Heart right ventricle (tissue), 16 donors: ENCODE measurements at regions of chr17 and their contacts with region 1.

Region 1: GRCh38 chr17:50087246-50087911 is 7.8 kb upstream of the PDK2 start:
- DNase-seq: peak; percentile 63 to 78
- ATAC-seq: peak; percentile 76 to 93 (median 86)
- H3K4me3 ChIP-seq: no peak overlapping the region
- H3K27ac ChIP-seq: no peak overlapping the region
- H3K4me1 ChIP-seq: no peaks in the 10 kb centered on the region
- H3K27me3 ChIP-seq: no peaks in the 10 kb centered on the region
- CTCF ChIP-seq: peak; percentile 94 to 99 (median 96)

Region 2: DNA sequence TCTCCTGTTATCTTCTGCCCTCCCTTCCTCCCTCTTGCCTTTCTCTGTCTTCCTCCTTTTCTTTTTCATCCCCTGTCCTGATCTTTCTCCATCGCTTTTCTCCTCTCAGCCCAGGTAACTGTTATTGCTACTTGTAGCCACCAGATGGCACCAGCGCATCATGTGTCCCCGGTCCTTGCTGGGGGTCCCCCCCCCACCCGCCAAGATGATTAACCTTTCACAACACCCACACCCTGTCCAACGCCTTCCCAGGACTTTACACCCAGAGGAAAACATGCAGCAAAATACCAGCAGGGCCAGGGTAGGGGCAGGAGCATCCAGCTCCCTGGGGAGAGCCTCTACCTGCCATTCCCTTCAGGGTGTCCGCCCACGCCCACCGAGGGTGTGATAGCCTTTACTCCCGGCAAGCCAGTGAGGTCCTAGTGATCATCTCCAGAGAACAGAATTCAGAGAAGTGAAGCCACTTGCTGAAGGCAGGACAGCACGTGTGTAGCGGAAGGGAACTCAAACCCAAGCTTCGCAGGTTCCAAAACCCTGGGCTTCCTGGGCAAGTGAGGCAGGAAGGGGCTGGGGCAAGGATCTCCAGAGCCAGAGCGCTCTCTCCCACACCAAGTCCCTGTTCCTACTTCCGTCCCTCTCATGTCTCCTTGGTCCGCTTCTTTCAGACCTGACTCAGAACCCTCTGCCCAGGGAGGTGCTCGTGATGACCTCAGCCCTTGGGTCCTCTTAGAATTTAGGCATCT is 226.1 kb before region 1 on chr17:
- intact Hi-C with region 1: loop called in 1 of 10 experiments (anchors 10 kb)
- DNase-seq: peak in 1 of 2 donors; percentile 27
- ATAC-seq: peak in 7 of 8 donors; percentile 16 to 58 (median 40)
- H3K4me3 ChIP-seq: no peak overlapping the region
- H3K27ac ChIP-seq: no peak overlapping the region
- H3K4me1 ChIP-seq: peaks cover 0 to 12% (median 3%) of the 10 kb centered on the region in 9 donors
- H3K27me3 ChIP-seq: peaks cover 0 to 14% (median 0%) of the 10 kb centered on the region in 7 donors
- CTCF ChIP-seq: peak; percentile 54 to 90 (median 84)

Region 3: GRCh38 chr17:49880291-49881053 is 206.9 kb before region 1 on chr17:
- intact Hi-C with region 1: loop called in 1 of 10 experiments (anchors 10 kb)
- DNase-seq: peak; percentile 61 to 76
- ATAC-seq: peak; percentile 83 to 93 (median 91)
- H3K4me3 ChIP-seq: peak overlapping the region in 1 of 10 donors; percentile 17
- H3K27ac ChIP-seq: no peak overlapping the region
- H3K4me1 ChIP-seq: peaks cover 0 to 9% (median 7%) of the 10 kb centered on the region in 9 donors
- H3K27me3 ChIP-seq: peaks cover 3 to 73% (median 58%) of the 10 kb centered on the region in 7 donors
- CTCF ChIP-seq: peak; percentile 89 to 100 (median 96)

Region 4: DNA sequence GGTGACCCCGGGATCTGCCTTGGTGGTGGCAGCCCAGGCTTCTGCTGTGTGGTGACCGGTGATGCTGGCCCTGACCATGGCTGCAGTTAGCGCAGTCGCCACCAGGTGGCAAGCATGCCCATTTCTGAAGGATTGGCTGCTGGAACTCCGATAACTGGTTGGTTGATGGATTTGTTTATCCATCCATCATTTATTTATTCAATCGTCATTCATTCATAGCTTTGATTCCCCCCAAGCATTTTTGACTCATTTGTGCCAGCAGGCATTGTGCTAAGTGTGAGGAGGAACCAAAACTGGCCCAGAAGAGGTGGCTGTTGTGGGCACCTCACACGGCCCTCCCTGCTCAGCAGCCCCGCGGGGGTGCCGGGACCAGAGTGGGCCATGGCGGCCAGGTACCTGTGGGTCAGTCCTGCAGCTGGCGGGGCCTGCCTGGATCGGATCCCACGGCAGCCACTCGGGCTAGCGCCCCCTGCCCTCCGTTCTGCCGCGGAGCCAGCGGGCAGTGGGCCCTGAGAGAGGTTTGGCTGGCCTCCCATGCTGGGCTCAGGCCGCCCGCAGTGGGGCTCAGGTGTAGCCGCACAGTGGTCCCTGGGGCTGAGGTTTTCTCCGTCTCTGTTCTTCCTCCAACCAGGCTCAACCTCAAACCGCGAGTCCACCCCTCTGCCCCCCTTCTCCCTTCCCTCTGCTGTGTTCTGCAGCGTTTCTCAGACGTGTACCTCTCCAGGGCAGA is 60.3 kb before region 1 on chr17:
- intact Hi-C with region 1: loop called (anchors 1 to 2 kb)
- DNase-seq: peak; percentile 79 to 87
- ATAC-seq: peak; percentile 75 to 89 (median 82)
- H3K4me3 ChIP-seq: peak overlapping the region in 5 of 10 donors; percentile 13 to 37 (median 28)
- H3K27ac ChIP-seq: peak overlapping the region in 1 of 10 donors; percentile 36
- H3K4me1 ChIP-seq: peaks cover 5 to 33% (median 18%) of the 10 kb centered on the region in 9 donors
- H3K27me3 ChIP-seq: peaks cover 0 to 20% (median 6%) of the 10 kb centered on the region in 7 donors
- CTCF ChIP-seq: peak; percentile 89 to 98 (median 94)

Region 5: DNA sequence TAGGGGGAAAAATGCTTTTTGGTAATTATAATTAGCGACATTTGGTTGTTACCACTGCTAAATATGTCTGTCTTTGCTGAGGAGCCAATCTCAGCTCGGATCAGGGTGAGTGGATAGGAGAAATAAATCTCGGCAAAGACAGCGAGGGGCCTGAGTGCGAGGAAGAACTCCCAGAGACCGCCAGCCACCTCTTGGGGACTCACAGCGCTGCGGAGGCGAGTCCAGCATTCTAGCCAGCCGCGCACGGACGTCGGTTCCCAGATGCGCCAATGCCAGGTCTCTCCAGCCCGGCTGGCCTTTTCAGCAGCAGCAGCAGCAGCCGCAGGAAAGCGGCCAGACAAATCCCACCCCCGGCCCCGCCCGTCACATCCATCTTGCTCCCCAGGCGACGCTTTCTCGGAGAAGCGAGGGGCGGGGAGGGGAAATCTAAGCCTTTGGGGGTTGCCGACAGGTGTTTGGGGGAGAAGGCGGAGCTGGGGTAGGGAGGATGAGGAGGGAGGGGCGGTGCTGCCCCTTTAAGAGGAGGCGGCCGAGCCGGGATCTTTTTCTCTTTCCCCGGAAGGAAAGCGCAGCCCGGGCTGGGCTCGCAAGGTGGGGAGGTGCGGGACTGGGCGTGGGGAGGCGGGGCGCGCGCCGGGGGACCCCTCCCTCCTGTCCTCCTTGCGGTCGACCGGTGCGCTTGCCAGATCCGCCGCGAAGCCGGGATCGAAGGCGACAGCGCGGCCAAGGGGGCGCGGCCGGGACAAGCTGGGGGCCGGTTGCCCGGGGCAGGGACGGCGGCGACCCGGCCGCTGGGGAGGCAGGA is 31.8 kb before region 1 on chr17 and contains the start of gene ITGA3:
- intact Hi-C with region 1: loop called in 3 of 10 experiments (anchors 2 to 5 kb)
- DNase-seq: peak; percentile 75 to 78
- ATAC-seq: peak; percentile 56 to 77 (median 72)
- H3K4me3 ChIP-seq: peak within 1 kb of the TSS; percentile 61 to 97 (median 80)
- H3K27ac ChIP-seq: peak within 1 kb of the TSS; percentile 57 to 97 (median 90)
- H3K4me1 ChIP-seq: peaks cover 27 to 85% (median 71%) of the 10 kb centered on the region in 9 donors
- H3K27me3 ChIP-seq: peaks cover 0 to 38% (median 0%) of the 10 kb centered on the region in 7 donors
- CTCF ChIP-seq: peak in 1 of 9 donors; percentile 2
- total RNA-seq, gene ITGA3: 12.5 to 44.2 (median 22.5) TPM

Region 6: GRCh38 chr17:50785946-50786570 is 698.7 kb after region 1 on chr17:
- intact Hi-C with region 1: no loop called
- DNase-seq: peak in 1 of 2 donors; percentile 30
- ATAC-seq: peak in 6 of 8 donors; percentile 66 to 87 (median 72)
- H3K4me3 ChIP-seq: no peak overlapping the region
- H3K27ac ChIP-seq: peak overlapping the region in 5 of 10 donors; percentile 22 to 52 (median 39)
- H3K4me1 ChIP-seq: peaks cover 0 to 23% (median 11%) of the 10 kb centered on the region in 9 donors
- H3K27me3 ChIP-seq: peaks cover 0 to 4% (median 0%) of the 10 kb centered on the region in 7 donors
- CTCF ChIP-seq: no peak